Mucosa of descending colon (tissue), 3 donors: ENCODE measurements at regions of chr12 and their contacts with region 1.

Region 1: DNA sequence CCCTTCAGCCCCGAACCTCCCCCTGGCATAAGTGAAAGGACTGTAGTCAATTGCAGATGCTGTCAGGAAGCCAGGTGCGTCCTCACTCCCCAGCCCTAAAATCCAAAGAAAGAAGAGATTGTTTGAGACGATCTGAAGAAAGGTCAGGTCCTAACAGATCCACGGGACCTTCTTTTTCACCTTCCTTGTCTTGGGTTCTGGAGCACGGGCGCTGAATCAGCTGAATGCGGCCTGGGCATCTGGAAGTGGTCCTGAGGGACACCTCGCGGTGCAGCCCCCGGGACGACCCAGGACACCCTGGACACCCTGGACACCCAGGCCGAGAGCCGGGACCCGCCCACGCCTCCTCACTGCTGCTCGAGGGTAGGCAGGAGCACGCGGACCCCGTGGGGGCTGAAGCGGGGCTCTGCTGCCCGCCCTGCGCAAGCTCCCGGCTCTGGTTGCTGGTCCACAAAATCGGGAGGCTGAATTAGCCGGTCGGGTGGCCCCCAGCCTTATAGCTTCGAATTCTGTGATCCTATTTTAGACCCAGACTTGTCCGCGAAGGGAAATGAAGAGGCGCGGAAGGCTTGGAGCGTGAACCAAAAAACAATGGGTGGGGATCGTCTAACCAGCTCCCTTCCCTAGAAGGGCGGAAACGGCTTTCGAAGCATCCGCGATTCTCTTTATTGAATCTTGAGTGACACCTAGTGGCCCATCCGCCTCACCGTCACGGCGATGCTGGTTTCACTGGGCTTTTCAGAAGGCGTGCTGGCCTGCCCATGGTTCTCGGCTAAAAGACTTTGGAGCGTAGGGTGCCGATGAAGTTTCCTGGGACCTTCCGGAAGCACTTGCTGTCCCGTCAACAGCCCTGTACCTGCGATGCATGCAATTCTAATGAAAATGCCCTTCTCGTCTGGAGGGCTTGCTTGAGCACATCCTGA is 46.4 kb upstream of the PLXNC1 start:
- DNase-seq: peak; percentile 85 to 95 (median 87)
- ATAC-seq: peak; percentile 90
- H3K4me3 ChIP-seq: peak overlapping the region; percentile 12
- H3K4me1 ChIP-seq: no peaks in the 10 kb centered on the region
- CTCF ChIP-seq: peak; percentile 56

Region 2: GRCh38 chr12:93025145-93025805 is 1076.7 kb before region 1 on chr12:
- intact Hi-C with region 1: no loop called
- DNase-seq: peak in 1 of 3 donors; percentile 68
- ATAC-seq: peak; percentile 88
- H3K4me3 ChIP-seq: no peak overlapping the region
- H3K4me1 ChIP-seq: peaks cover 9% of the 10 kb centered on the region
- CTCF ChIP-seq: no peak

Region 3: DNA sequence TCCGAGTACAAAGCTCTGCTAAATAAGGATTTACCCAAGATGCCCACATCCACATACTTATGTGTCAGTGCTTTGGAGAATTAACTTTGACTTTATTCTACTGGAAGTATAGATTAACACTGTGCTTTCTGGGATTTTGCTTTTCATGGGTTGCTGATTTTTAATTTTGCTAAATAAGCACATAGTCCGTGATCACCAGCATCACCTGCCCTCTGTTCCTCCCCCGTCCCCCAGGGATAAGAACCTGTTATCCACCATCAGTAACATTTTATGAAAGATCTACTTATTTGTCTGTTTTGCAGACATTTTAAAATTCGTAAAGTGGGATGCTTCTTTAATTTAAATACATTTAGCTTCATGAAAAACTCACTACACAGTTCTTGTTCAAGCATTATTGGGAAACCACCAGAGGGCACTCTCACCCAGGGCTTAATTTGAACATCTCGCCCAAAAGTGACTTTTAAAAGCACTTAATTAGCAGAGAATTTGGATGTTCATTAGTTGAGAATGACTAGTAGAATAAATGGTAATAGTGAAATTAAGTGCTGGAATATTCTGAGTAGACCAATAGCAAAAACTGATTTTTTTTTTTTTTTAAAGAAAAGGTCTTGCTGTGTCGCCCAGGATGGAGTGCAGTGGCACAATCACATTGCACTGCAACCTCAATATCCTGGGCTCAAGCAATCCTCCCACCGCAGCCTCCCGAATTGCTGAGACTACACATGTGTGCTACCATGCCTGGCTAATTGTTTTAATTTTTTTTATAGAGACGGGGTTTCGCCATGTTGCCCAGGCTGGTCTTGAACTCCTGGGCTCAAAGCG is 599.0 kb before region 1 on chr12:
- intact Hi-C with region 1: loop called (anchors 5 kb)
- DNase-seq: peak in 1 of 3 donors; percentile 73
- ATAC-seq: no peak
- H3K4me3 ChIP-seq: no peak overlapping the region
- H3K4me1 ChIP-seq: no peaks in the 10 kb centered on the region
- CTCF ChIP-seq: peak; percentile 54

Region 4: GRCh38 chr12:93766796-93767523 is 335.0 kb before region 1 on chr12:
- intact Hi-C with region 1: loop called (anchors 5 to 10 kb)
- DNase-seq: peak in 1 of 3 donors; percentile 59
- ATAC-seq: peak; percentile 68
- H3K4me3 ChIP-seq: no peak overlapping the region
- H3K4me1 ChIP-seq: no peaks in the 10 kb centered on the region
- CTCF ChIP-seq: no peak